ENCODE measurements at regions of chr18 and their contacts with region 1.

Region 1: GRCh38 chr18:24726727-24727492 is 266.5 kb downstream of the HRH4 start:
- DNase-seq: peak; percentile 69
- ATAC-seq: peak; percentile 78
- H3K4me3 ChIP-seq: no peak overlapping the region
- H3K27ac ChIP-seq: no peak overlapping the region
- H3K4me1 ChIP-seq: no peaks in the 10 kb centered on the region
- H3K27me3 ChIP-seq: peaks cover 32% of the 10 kb centered on the region
- CTCF ChIP-seq: peak; percentile 64 to 93 (median 79); a peak in 5 of 6 replicates
- POLR2A ChIP-seq: no peak
- RAD21 ChIP-seq: peak; percentile 84

Region 2: GRCh38 chr18:24600076-24600654 is 126.7 kb before region 1 on chr18:
- CTCF ChIA-PET with region 1: interaction called, 15 read pairs
- POLR2A ChIA-PET with region 1: no interaction called
- RAD21 ChIA-PET with region 1: interaction called in 1 of 2 experiments, 5 read pairs
- intact Hi-C with region 1: loop called (anchors 1 kb)
- DNase-seq: peak; percentile 27
- ATAC-seq: peak; percentile 65
- H3K4me3 ChIP-seq: no peak overlapping the region
- H3K27ac ChIP-seq: no peak overlapping the region
- H3K4me1 ChIP-seq: no peaks in the 10 kb centered on the region
- H3K27me3 ChIP-seq: peaks cover 37% of the 10 kb centered on the region
- CTCF ChIP-seq: peak; percentile 50 to 74 (median 54); a peak in 5 of 6 replicates
- POLR2A ChIP-seq: no peak
- RAD21 ChIP-seq: peak; percentile 65

Region 3: DNA sequence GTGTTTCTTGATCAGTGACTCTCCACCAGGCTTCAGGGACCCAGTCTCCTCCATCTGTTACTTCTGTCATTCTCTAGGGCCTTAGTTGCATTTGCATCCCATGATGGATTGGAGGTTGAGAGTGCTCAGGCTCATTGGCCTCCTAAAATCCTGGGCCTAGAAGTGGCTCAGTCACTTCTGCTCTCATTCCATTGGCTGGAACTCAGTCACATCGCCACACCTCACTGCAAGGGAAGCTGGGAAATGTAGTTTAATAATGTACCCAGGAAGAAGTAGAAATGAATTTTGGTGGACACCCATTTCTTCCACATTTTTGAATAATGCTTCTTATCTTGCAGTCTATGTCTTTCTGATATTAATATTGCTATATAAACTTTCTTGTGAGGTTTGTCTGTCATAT is 42.9 kb before region 1 on chr18:
- CTCF ChIA-PET with region 1: no interaction called
- POLR2A ChIA-PET with region 1: no interaction called
- RAD21 ChIA-PET with region 1: no interaction called
- intact Hi-C with region 1: no loop called
- DNase-seq: peak; percentile 23
- ATAC-seq: peak; percentile 90
- H3K4me3 ChIP-seq: no peak overlapping the region
- H3K27ac ChIP-seq: no peak overlapping the region
- H3K4me1 ChIP-seq: no peaks in the 10 kb centered on the region
- H3K27me3 ChIP-seq: peaks cover 7% of the 10 kb centered on the region; the same call in 1 of the 2 replicates
- CTCF ChIP-seq: no peak
- POLR2A ChIP-seq: no peak
- RAD21 ChIP-seq: no peak

Region 4: DNA sequence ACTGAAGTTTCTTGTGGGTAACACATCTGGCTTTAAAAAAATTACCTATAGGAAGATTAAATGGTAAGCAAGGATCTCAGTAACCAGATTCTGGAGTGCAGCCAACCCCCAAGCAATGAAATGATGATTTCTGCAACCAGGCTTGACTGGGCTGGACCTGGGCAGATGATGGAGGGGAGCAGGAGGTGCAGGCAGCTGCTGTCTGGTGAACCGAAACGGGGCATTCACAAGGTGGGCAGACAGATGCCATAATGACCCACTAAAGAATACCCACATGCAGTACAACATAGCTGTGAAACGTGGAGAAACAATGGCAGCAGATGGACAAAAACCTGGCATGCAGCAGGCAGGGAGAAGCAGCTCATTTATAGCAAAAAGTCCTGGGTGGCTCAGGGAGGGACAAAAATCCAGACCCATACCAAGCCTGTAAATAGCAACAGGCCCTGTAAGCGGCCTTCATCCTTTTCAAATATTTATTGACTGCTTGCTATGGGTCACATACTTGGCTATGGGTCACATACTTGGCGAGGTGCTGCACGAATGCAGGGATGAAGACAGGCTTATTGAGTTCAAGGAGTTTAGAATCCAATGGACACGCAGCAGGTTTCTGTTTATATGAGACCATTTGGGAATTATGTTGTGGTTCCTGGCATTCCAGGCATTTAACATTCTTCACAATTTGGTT is 21.8 kb before region 1 on chr18:
- CTCF ChIA-PET with region 1: interaction called, 3 read pairs
- POLR2A ChIA-PET with region 1: no interaction called
- RAD21 ChIA-PET with region 1: no interaction called
- intact Hi-C with region 1: loop called (anchors 2 kb)
- DNase-seq: no peak
- ATAC-seq: no peak
- H3K4me3 ChIP-seq: no peak overlapping the region
- H3K27ac ChIP-seq: no peak overlapping the region
- H3K4me1 ChIP-seq: no peaks in the 10 kb centered on the region
- H3K27me3 ChIP-seq: peaks cover 8% of the 10 kb centered on the region; the same call in 1 of the 2 replicates
- CTCF ChIP-seq: no peak
- POLR2A ChIP-seq: no peak
- RAD21 ChIP-seq: no peak